ENCODE measurements at regions of chr9 and their contacts with region 1.

Region 1: DNA sequence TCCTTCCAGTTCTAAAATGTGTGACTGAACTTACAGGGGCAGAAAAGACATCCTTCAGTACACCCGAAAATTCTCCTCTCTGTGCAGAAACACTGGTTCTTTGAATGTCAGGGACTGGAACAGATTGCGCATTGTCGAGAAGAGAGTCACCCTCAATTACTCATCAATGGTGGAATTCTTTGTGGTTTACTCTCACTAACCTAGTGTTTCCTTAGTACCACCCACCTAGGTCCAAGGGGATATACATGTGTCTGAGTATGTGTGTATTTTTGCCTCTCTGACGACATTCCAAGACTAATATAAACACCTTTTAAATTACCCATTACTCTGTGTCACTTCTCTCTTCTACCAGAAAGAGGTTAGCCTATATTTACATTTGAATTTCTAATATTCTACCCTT is 660.8 kb downstream of the TLE1 start:
- DNase-seq: peak; percentile 61
- H3K4me3 ChIP-seq: no peak overlapping the region
- H3K27ac ChIP-seq: peak overlapping the region; percentile 42
- H3K4me1 ChIP-seq: peaks cover 6% of the 10 kb centered on the region
- H3K27me3 ChIP-seq: no peaks in the 10 kb centered on the region
- CTCF ChIP-seq: no peak
- POLR2A ChIP-seq: no peak

Region 2: DNA sequence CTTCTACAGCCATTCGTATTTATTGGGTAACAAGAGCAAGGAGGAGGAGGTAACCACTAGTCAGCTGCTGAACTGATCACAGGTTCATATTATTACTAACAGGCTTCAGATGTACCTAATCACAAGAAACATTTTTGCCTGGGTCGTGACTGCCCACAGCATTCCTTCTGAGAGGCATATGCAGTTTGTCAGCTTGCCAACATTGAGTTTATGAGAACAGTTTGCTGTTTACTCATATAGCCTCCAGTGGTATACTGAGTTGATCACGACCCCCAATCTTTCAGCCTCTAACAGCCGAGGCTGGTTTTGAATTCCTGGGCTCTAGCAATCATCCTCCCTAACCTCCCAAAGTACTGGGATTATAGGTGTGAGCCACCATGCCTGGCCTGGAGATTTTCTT is 32.7 kb before region 1 on chr9:
- CTCF ChIA-PET with region 1: no interaction called
- POLR2A ChIA-PET with region 1: no interaction called
- dilution Hi-C with region 1: no loop called
- intact Hi-C with region 1: loop called (anchors 2 kb)
- DNase-seq: no peak
- H3K4me3 ChIP-seq: no peak overlapping the region
- H3K27ac ChIP-seq: no peak overlapping the region
- H3K4me1 ChIP-seq: peaks cover 11% of the 10 kb centered on the region
- H3K27me3 ChIP-seq: no peaks in the 10 kb centered on the region
- CTCF ChIP-seq: no peak
- POLR2A ChIP-seq: no peak